ENCODE measurements at regions of chr12 and their contacts with region 1.

Region 1: DNA sequence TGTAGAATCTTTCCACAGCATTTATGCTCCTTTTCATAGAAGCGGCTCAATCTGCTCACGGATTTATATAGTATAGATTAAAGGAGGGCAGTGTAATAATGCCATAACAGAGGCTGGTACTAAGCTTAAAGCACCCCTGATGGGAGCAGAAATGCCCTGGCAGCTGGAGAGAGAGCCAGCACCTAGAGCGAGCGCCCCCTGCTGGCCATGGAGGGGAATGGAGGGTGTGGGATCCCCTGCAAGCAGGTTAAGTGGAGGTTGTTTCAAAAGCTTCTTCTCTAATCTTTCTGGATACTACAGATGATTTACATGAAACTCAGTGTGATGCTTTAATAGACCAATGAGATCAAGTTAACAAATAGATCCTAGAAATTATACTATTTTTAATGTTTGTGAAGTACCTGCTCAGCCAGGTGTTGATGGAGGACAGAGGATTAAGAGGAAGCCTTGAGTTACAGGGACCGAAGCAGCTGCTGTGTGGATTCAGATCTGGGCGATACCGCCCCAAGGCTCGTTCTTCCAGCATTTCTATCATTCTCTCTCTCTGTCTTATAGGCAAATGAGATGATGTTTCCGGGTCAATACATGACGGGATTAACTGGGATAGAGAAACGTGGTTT is 1519.3 kb upstream of the TMEM132C start:
- DNase-seq: peak in 1 of 2 experiments; percentile 87
- H3K4me3 ChIP-seq: no peak overlapping the region
- H3K27ac ChIP-seq: no peak overlapping the region
- H3K4me1 ChIP-seq: no peaks in the 10 kb centered on the region
- H3K27me3 ChIP-seq: no peaks in the 10 kb centered on the region
- CTCF ChIP-seq: peak; percentile 81 to 90 (median 90)
- EP300 ChIP-seq: no peak
- POLR2A ChIP-seq: no peak
- RAD21 ChIP-seq: peak; percentile 69 to 78

Region 2: DNA sequence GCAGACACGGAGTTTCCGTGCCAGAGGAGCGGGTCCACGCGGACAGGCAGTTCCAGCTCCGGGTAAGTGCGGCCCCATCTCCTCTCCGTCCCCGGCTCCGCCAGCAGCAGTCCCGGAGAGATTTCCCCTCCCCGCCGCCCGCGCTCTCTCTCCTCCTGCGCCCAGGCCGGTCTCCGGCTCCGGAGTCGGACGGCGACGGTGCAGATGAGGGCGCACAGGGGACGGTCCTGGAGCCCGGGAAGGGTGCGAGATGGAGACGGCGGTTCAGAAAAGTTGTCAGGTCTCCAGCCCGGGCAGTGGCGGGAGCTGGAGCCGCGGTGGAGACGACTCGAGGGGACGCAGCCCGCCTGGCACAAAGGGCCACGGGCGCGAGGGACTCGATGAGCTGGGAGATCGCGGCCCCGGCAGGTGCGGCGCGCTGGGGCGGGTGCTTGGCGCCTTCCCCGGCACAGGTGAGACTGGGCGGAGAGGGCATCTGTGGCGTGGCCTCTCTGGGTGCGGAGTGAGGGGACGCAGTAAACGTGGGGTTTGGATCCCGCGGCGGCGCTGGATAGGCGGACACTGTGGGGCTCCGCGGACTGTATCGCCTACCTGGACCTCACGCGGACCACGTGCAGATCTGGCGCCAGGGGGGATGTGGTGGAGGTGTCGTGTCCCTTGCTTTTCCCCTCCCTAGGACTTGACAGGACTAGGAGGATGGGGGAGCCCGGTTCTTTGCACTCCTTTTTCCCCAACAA is 21.0 kb before region 1 on chr12:
- CTCF ChIA-PET with region 1: interaction called, 23 read pairs
- POLR2A ChIA-PET with region 1: no interaction called
- DNase-seq: peak in 1 of 2 experiments; percentile 71
- H3K4me3 ChIP-seq: peak overlapping the region; percentile 45 to 64 (median 52)
- H3K27ac ChIP-seq: no peak overlapping the region
- H3K4me1 ChIP-seq: peaks cover 0 to 21% (median 10%) of the 10 kb centered on the region in 4 experiments; a peak in 6 of 7 replicates
- H3K27me3 ChIP-seq: peaks cover 28 to 46% (median 40%) of the 10 kb centered on the region in 4 experiments
- CTCF ChIP-seq: no peak
- EP300 ChIP-seq: no peak
- POLR2A ChIP-seq: no peak
- RAD21 ChIP-seq: no peak

Region 3: GRCh38 chr12:126734710-126735109 is 12.9 kb before region 1 on chr12:
- CTCF ChIA-PET with region 1: interaction called, 30 read pairs
- POLR2A ChIA-PET with region 1: interaction called, 3 read pairs
- DNase-seq: no peak
- H3K4me3 ChIP-seq: no peak overlapping the region
- H3K27ac ChIP-seq: no peak overlapping the region
- H3K4me1 ChIP-seq: peaks cover 0 to 4% (median 0%) of the 10 kb centered on the region in 4 experiments; a peak in 2 of 7 replicates
- H3K27me3 ChIP-seq: no peaks in the 10 kb centered on the region; a peak in 1 of 7 replicates
- CTCF ChIP-seq: no peak
- EP300 ChIP-seq: no peak
- POLR2A ChIP-seq: no peak
- RAD21 ChIP-seq: no peak

Region 4: DNA sequence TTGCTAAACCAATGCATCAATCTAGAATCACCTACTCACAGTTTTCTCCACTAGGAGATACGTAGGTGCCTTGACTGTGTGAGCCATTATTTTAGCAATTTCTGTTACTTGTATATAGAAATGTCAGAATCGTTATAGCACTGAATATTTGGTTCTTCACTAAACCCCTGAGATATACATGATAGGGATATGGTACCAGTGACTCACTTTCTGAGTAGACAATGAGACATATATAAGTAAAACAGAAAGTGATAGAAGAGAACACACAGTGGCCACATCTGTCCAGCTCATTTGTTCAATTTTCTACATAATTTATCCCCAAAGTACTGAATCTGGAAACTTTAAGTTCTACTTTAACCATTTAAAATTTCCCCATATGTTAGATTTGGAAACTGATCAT is 13.8 kb after region 1 on chr12:
- CTCF ChIA-PET with region 1: interaction called, 59 read pairs
- POLR2A ChIA-PET with region 1: no interaction called
- DNase-seq: no peak
- H3K4me3 ChIP-seq: no peak overlapping the region
- H3K27ac ChIP-seq: no peak overlapping the region
- H3K4me1 ChIP-seq: no peaks in the 10 kb centered on the region
- H3K27me3 ChIP-seq: no peaks in the 10 kb centered on the region
- CTCF ChIP-seq: no peak
- EP300 ChIP-seq: no peak
- POLR2A ChIP-seq: no peak
- RAD21 ChIP-seq: no peak

Region 5: GRCh38 chr12:126784328-126784921 is 36.8 kb after region 1 on chr12:
- CTCF ChIA-PET with region 1: interaction called, 23 read pairs
- POLR2A ChIA-PET with region 1: no interaction called
- DNase-seq: peak; percentile 58 to 83
- H3K4me3 ChIP-seq: no peak overlapping the region
- H3K27ac ChIP-seq: no peak overlapping the region
- H3K4me1 ChIP-seq: no peaks in the 10 kb centered on the region
- H3K27me3 ChIP-seq: no peaks in the 10 kb centered on the region
- CTCF ChIP-seq: peak; percentile 54 to 94 (median 89)
- EP300 ChIP-seq: no peak
- POLR2A ChIP-seq: no peak
- RAD21 ChIP-seq: peak; percentile 75 to 82

Region 6: DNA sequence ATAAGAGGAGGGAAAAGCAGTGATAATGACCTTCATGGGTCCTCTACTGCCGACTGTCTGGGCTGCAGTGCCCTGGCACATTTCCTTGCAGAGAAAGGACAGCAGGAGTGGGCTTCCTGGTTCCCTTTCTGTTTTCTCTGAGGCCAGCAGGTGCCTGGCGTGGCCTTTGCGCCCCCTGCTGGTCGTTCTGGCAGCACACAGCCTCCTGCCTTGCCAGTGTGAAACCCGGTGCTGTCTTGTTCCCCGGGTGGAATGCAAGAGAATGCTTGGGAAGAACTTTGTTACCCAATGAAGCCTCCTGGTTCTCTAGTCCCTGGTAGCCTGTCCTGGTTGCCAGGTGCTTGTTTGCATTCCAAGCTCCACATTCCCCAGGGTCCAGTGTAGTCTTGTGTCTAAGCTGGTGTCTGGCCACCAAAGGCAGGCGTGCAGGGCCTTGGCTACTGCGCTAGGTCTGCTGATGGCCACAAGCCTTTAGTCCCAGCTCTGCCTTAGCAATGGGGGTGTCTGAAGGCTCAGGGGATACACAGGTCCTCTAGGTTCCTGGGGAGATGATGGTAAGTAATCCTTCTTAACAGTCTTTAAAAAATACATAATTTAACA is 126.9 kb after region 1 on chr12:
- CTCF ChIA-PET with region 1: interaction called, 10 read pairs
- POLR2A ChIA-PET with region 1: no interaction called
- DNase-seq: peak; percentile 74 to 89
- H3K4me3 ChIP-seq: no peak overlapping the region
- H3K27ac ChIP-seq: no peak overlapping the region
- H3K4me1 ChIP-seq: no peaks in the 10 kb centered on the region
- H3K27me3 ChIP-seq: no peaks in the 10 kb centered on the region
- CTCF ChIP-seq: peak; percentile 95 to 97 (median 97)
- EP300 ChIP-seq: no peak
- POLR2A ChIP-seq: no peak
- RAD21 ChIP-seq: peak; percentile 88 to 91